ENCODE measurements at regions of chr1 and their contacts with region 1.

Region 1: DNA sequence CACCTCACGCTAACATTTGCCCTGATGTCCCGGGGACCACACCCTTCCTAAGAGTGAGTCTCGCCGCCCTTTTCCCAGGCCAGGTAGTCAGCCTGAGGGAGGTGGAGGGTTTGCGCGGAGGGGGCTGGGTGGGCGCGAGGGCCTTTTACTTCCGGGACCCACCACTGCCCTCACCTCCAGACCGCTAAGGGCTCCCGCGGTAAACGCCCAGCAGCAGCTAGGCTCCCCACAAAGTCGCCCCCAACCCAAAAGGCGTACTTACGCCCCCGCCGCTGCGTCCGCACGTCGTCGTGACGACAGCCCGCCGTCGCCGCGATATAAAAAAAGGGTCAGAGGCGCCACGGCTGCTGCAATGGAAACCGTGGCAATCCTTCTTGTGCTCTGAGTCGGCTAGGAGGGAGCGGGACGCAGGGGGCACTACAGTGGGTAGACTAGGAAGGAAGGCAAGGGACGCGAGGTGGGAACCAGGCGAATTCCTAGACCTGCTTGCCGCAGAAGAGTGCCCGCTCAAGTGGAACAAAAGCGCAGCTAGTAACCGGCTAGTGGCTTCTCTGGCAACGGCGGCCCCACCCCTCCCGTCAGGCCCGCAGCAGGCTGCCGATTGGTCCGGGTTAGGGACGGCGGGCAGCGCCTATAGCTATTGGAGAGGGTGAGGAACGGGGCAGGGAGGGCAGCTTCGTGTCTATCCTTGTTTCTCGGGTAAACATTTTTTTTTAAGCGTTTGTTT is at the start of gene ODF2L:
- DNase-seq: peak; percentile 91
- ATAC-seq: peak; percentile 99
- H3K4me3 Mint-ChIP-seq: peak within 1 kb of the TSS; percentile 81
- H3K27ac Mint-ChIP-seq: peak within 1 kb of the TSS; percentile 91
- H3K4me1 Mint-ChIP-seq: peaks cover 15% of the 10 kb centered on the region
- H3K27me3 Mint-ChIP-seq: peaks cover 7% of the 10 kb centered on the region
- CTCF ChIP-seq: no peak
- total RNA-seq, gene ODF2L: 24.4 to 31.0 TPM (median 30.2 TPM) in 3 replicates

Region 2: DNA sequence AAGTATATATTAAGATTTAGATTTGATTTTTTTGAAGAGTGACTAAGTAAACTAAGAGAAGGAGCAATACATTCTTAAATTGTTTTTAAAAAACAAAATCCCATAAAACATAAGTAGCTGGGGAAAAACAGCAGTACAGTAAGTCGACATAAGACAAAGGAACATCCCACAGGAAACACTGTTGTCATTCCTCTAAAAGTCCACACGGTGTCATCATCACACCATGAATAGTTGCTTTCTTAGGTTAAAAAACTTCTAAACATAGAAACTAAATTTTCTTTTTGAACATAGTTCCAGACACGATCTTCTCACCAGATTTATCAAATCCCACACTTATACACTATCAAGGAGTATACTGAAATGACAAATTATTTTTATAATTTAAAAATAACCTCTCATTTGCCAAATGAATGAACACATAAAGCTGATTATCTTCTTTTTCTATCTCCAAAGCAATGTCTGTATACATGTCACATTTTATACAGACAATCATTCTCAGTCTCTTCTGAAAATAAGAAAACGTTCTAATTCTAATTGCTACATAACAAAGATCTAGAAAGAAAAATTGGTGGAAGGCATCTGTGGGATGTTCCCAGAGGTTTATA is 15.6 kb before region 1 on chr1:
- CTCF ChIA-PET with region 1: interaction called, 14 read pairs
- POLR2A ChIA-PET with region 1: no interaction called
- DNase-seq: no peak
- ATAC-seq: peak; percentile 47
- H3K4me3 Mint-ChIP-seq: no peak overlapping the region
- H3K27ac Mint-ChIP-seq: no peak overlapping the region
- H3K4me1 Mint-ChIP-seq: no peaks in the 10 kb centered on the region
- H3K27me3 Mint-ChIP-seq: no peaks in the 10 kb centered on the region
- CTCF ChIP-seq: peak; percentile 57